Uterus (tissue), 4 donors: ENCODE measurements at regions of chr7 and their contacts with region 1.

Region 1: DNA sequence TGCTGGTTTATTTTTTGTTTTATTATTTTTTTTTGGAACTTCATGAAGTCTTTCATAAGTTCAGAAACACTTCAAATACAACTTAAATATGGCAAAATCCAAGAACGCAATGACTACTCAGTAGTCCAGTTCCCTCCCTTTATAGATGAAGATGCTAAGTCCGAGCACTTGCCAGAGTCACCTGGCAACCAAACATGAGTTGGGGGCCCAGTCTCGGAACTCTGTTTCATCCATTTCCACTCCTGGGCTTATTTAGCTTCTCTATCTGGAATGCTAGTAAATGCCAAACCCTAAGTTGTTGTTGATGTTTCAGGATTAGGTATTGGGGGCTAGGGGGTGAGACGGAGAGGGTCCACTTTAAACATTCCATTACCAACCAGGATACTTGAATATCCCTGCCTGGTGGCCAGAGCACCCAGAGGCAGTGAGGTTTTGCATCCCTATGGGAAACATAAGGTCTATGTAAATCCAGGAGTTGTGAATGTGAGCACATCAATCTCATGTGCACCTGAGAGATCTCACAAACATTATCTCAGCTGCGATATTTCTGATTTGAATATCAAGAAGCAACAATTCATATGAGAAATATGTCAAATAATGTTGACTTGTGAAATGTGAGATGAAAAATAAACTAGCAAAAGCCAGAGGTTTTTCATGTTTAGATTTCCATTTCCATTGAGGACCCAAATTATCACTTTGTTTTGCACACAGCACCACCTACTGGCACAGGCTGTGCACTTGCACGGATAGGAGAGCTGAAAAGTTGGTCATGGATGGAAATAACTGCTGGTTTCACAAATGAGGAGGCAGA is 129.3 kb downstream of the PKD1L1 start:
- DNase-seq: peak; percentile 76 to 79
- H3K4me3 ChIP-seq: no peak overlapping the region
- H3K27ac ChIP-seq: no peak overlapping the region
- H3K4me1 ChIP-seq: no peaks in the 10 kb centered on the region
- H3K27me3 ChIP-seq: no peaks in the 10 kb centered on the region
- CTCF ChIP-seq: peak; percentile 87 to 96 (median 92)
- POLR2A ChIP-seq: no peak

Region 2: DNA sequence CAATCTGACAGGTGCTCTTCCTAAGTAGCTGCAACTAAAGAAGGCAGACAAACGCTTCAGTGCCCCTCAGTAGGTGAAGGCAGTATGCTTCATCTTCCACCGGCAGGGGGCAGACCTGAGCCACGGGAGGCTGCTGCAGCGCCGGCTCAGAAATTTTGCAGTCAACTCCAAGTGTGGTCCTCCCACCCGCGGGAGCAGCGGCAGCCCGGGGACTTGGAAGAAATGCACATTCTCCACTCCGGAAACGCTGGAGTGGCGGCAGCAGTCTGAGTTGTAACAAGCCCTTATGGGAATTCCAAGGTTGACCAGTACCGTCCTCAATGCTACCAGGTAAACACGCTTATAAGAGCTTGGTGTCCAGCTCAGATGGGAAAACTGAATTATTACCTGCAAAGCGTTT is 1901.3 kb before region 1 on chr7:
- intact Hi-C with region 1: loop called (anchors 10 kb)
- DNase-seq: peak; percentile 87 to 88
- H3K4me3 ChIP-seq: peak overlapping the region in 1 of 2 donors; percentile 76
- H3K27ac ChIP-seq: peak overlapping the region; percentile 40 to 89
- H3K4me1 ChIP-seq: peaks cover 0 to 4% of the 10 kb centered on the region in 2 donors
- H3K27me3 ChIP-seq: no peaks in the 10 kb centered on the region
- CTCF ChIP-seq: peak; percentile 84 to 95 (median 92)
- POLR2A ChIP-seq: no peak

Region 3: GRCh38 chr7:47266131-47266706 is 552.8 kb before region 1 on chr7:
- intact Hi-C with region 1: loop called (anchors 2 kb)
- DNase-seq: peak; percentile 65 to 71
- H3K4me3 ChIP-seq: no peak overlapping the region
- H3K27ac ChIP-seq: peak overlapping the region in 1 of 2 donors; percentile 46
- H3K4me1 ChIP-seq: no peaks in the 10 kb centered on the region
- H3K27me3 ChIP-seq: no peaks in the 10 kb centered on the region
- CTCF ChIP-seq: peak; percentile 86 to 93 (median 92)
- POLR2A ChIP-seq: no peak

Region 4: GRCh38 chr7:47444379-47445057 is 374.5 kb before region 1 on chr7:
- intact Hi-C with region 1: loop called (anchors 10 kb)
- DNase-seq: no peak
- H3K4me3 ChIP-seq: no peak overlapping the region
- H3K27ac ChIP-seq: no peak overlapping the region
- H3K4me1 ChIP-seq: peaks cover 0 to 4% of the 10 kb centered on the region in 2 donors
- H3K27me3 ChIP-seq: no peaks in the 10 kb centered on the region
- CTCF ChIP-seq: peak in 3 of 4 experiments; percentile 40 to 53 (median 44)
- POLR2A ChIP-seq: no peak

Region 5: GRCh38 chr7:47600199-47601118 is 218.5 kb before region 1 on chr7:
- intact Hi-C with region 1: no loop called
- DNase-seq: no peak
- H3K4me3 ChIP-seq: no peak overlapping the region
- H3K27ac ChIP-seq: peak overlapping the region; percentile 48 to 56
- H3K4me1 ChIP-seq: peaks cover 0 to 6% of the 10 kb centered on the region in 2 donors
- H3K27me3 ChIP-seq: no peaks in the 10 kb centered on the region
- CTCF ChIP-seq: no peak
- POLR2A ChIP-seq: no peak